ENCODE measurements at regions of chr12 and their contacts with region 1.

Region 1: DNA sequence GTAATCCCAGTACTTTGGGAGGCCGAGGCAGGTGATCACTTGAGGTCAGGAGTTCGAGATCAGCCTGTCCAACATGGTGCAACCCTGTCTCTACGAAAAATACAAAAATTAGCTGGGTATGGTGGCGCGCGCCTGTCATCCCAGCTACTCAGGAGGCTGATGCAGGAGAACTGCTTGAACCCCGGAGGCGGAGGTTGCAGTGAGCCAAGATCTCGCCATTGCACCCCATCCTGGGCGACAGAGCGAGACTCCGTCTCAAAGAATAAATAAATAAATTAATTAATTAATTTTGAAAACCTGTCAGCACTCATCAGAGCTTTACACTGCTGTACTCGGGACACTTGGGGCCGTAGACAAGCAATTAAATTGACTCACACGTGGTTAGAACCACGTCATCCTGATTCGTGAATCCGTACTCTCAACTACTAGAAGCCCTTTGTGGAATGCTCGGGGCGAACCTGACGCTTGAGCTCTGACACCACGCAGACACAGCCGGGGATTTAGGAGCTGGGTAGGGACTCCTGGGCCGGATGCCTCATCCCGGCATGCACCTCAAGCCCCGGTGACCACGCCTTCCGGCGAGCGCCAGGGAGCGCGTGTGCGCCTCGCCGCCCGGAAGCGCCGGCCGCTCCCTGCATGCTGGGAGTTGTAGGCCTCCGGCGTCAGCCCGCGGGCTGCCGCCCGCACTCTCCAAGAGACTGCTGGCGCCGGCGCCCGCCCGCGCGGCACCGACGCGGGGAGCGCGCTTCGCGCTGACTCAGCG is at the start of gene XPOT:
- DNase-seq: peak; percentile 92 to 97 (median 93)
- H3K4me3 ChIP-seq: peak within 1 kb of the TSS; percentile 90
- H3K27ac ChIP-seq: peak within 1 kb of the TSS; percentile 54 to 96
- H3K4me1 ChIP-seq: peaks cover 2% of the 10 kb centered on the region
- H3K27me3 ChIP-seq: no peaks in the 10 kb centered on the region
- CTCF ChIP-seq: no peak
- EP300 ChIP-seq: peak; percentile 28
- POLR2A ChIP-seq: no peak
- total RNA-seq, gene XPOT: 19.7 to 170 (median 37.9) TPM

Region 2: GRCh38 chr12:64451687-64452558 is 48.0 kb after region 1 on chr12 and contains the start of gene TBK1:
- intact Hi-C with region 1: loop called in 1 of 4 experiments (anchors 10 kb)
- DNase-seq: peak; percentile 87 to 96 (median 92)
- H3K4me3 ChIP-seq: peak within 1 kb of the TSS; percentile 85
- H3K27ac ChIP-seq: peak within 1 kb of the TSS; percentile 91 to 92
- H3K4me1 ChIP-seq: peaks cover 1% of the 10 kb centered on the region
- H3K27me3 ChIP-seq: no peaks in the 10 kb centered on the region
- CTCF ChIP-seq: peak in 2 of 3 donors; percentile 31 to 51
- EP300 ChIP-seq: no peak
- POLR2A ChIP-seq: peak; percentile 69
- total RNA-seq, gene TBK1: 15.7 to 25.4 (median 19.8) TPM

Region 3: GRCh38 chr12:64587447-64587846 is 183.6 kb after region 1 on chr12:
- intact Hi-C with region 1: no loop called
- DNase-seq: no peak
- H3K4me3 ChIP-seq: no peak overlapping the region
- H3K27ac ChIP-seq: no peak overlapping the region
- H3K4me1 ChIP-seq: peaks cover 6% of the 10 kb centered on the region
- H3K27me3 ChIP-seq: no peaks in the 10 kb centered on the region
- CTCF ChIP-seq: no peak
- EP300 ChIP-seq: no peak
- POLR2A ChIP-seq: no peak